ENCODE measurements at regions of chr12 and their contacts with region 1.

Region 1: DNA sequence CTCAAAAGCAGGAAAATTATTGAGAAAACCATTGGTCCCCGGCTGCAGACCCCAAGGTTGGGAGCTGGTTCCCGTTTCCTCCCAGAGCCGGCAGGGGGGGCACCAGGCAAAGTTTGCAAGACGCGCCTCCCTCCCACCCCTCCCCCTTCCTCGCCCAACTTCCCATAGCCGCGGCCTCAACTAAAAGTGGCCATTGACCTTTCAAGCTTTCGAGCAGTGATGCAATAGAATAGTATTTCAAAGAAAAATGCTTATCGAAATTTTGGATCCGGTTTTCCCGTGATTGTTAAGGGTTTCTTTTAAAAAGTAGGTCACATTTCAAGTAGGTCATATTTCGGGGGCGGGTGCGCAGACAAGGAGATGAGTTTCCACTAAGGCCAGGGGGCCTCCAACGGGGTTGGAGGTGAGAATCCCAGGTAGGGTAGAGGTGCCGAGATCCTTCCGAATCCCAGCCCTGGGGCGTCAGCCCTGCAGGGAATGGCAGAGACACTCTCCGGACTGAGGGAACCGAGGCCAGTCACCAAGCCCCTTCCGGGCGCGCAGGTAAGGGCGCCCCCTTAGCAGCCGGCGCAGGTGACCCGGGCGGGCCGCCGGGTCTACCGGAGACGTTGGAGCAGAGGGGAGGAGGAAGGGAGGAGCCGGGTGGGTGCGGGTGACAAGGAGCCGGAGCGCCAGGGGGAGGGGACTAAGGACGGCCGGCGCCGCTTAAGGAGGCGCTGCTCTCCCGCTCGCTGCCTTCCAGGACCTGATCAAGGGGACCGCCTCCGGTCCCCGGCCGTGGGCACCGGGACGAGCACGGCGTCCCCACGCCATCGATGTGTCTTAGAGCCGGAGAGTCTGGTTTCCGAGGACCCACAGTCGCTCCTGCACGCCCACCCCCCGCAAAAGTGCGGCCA is 2.6 kb upstream of the SOCS2 start:
- DNase-seq: peak; percentile 68
- H3K4me3 Mint-ChIP-seq: peak overlapping the region; percentile 88
- H3K27ac Mint-ChIP-seq: peak overlapping the region; percentile 77
- H3K4me1 Mint-ChIP-seq: peaks cover 42% of the 10 kb centered on the region
- H3K27me3 Mint-ChIP-seq: peaks cover 15% of the 10 kb centered on the region

Region 2: GRCh38 chr12:93467351-93468007 is 102.4 kb before region 1 on chr12 and contains the start of gene MRPL42:
- intact Hi-C with region 1: loop called (anchors 1 kb)
- DNase-seq: peak; percentile 90
- H3K4me3 Mint-ChIP-seq: peak within 1 kb of the TSS; percentile 96
- H3K27ac Mint-ChIP-seq: peak within 1 kb of the TSS; percentile 93
- H3K4me1 Mint-ChIP-seq: peaks cover 43% of the 10 kb centered on the region
- H3K27me3 Mint-ChIP-seq: no peaks in the 10 kb centered on the region
- total RNA-seq, gene MRPL42: 83.2 and 87.0 TPM in 2 replicates

Region 3: DNA sequence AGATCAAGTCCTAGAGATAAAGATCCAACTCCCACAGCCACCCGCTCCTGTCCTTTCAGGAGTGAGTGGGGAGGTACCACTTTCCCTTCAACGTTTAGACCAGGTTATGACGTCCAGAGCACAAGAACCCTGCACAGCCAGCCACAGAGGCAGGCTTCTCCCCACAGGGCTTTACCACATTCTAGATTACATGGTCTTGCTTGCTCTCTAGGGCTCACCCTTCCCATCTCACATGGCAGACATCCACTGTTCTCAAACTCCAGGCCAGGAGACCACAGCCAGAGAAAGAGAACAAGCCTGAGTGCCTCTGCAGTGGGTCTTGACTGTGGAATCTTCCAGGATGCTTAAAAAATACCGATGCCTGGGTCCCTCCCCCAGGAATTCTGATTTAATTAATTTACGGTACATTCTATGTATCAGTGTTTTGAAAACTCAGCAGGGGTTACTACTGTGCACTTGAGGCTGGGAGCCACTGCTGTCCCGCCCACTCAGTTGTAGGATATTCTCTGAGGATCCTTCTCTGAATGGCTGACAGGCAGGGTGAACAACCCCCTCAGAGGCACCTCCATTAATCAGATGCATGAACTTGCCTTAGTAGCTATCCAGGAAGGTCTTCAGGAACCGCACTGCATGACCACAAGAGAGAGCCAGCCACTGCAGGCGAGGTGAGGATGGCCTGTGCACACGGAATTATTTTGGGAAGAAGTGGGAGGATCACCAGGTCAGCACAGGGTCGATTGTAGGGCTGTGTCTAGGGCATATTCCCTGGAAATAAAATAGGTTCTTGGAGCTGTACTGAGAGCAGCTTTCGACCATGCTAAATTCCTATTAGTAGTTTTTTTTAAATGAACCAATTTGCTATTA is 18.9 kb before region 1 on chr12:
- intact Hi-C with region 1: no loop called
- DNase-seq: no peak
- H3K4me3 Mint-ChIP-seq: no peak overlapping the region
- H3K27ac Mint-ChIP-seq: no peak overlapping the region
- H3K4me1 Mint-ChIP-seq: peaks cover 3% of the 10 kb centered on the region
- H3K27me3 Mint-ChIP-seq: no peaks in the 10 kb centered on the region

Region 4: GRCh38 chr12:93677195-93678064 is 107.5 kb after region 1 on chr12 and contains the start of gene CRADD:
- intact Hi-C with region 1: loop called (anchors 1 kb)
- DNase-seq: peak; percentile 86
- H3K4me3 Mint-ChIP-seq: peak within 1 kb of the TSS; percentile 85
- H3K27ac Mint-ChIP-seq: peak within 1 kb of the TSS; percentile 96
- H3K4me1 Mint-ChIP-seq: peaks cover 38% of the 10 kb centered on the region
- H3K27me3 Mint-ChIP-seq: no peaks in the 10 kb centered on the region
- total RNA-seq, gene CRADD: 11.2 and 12.3 TPM in 2 replicates

Region 5: GRCh38 chr12:93847517-93848474 is 277.9 kb after region 1 on chr12:
- intact Hi-C with region 1: loop called (anchors 1 kb)
- DNase-seq: peak; percentile 33
- H3K4me3 Mint-ChIP-seq: peak overlapping the region; percentile 49
- H3K27ac Mint-ChIP-seq: peak overlapping the region; percentile 86
- H3K4me1 Mint-ChIP-seq: peaks cover 74% of the 10 kb centered on the region
- H3K27me3 Mint-ChIP-seq: no peaks in the 10 kb centered on the region

Region 6: GRCh38 chr12:94101738-94102660 is 532.1 kb after region 1 on chr12:
- intact Hi-C with region 1: loop called (anchors 1 kb)
- DNase-seq: peak; percentile 81
- H3K4me3 Mint-ChIP-seq: peak overlapping the region; percentile 84
- H3K27ac Mint-ChIP-seq: peak overlapping the region; percentile 72
- H3K4me1 Mint-ChIP-seq: peaks cover 37% of the 10 kb centered on the region
- H3K27me3 Mint-ChIP-seq: peaks cover 10% of the 10 kb centered on the region

Region 7: GRCh38 chr12:95003213-95003920 is 1433.5 kb after region 1 on chr12 and contains the start of gene NDUFA12:
- intact Hi-C with region 1: loop called (anchors 5 kb)
- DNase-seq: peak; percentile 94
- H3K4me3 Mint-ChIP-seq: peak within 1 kb of the TSS; percentile 95
- H3K27ac Mint-ChIP-seq: peak within 1 kb of the TSS; percentile 93
- H3K4me1 Mint-ChIP-seq: peaks cover 30% of the 10 kb centered on the region
- H3K27me3 Mint-ChIP-seq: no peaks in the 10 kb centered on the region
- total RNA-seq, gene NDUFA12: 113 TPM in 2 replicates

Measured in activated T-helper 1 cell treated with anti-CD3 and anti-CD28 coated beads, Interleukin-12 subunit alpha, Interleukin-12 subunit beta, Interleukin-2, Interleukin-4 antibody, amounts not matched to agents 30 ng/mL and 10 ng/mL and 1 ng/mL, durations not matched to agents 14 hours and 24 hours and 36 hours (primary cell).